ENCODE measurements at regions of chr6 and their contacts with region 1.

Region 1: DNA sequence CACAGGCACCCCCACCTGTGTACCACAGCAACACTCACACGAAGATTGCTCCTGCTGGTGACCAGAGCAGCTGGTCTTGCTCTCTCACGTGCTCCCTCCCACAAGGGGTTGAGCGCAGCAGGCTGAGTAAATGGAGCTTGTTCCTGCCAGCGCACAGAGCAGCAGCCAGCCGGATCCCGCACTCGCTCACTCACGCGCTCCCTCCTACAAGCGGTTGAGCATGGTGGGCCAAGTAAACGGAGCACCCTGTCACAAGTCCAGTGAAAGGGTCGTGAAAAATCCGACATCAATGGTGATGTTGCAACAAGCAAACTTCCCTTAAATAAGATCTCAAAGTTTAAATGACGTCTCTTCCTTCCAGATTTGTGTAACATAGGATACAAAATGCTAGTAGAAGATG is 313.7 kb downstream of the FOXC1 start:
- DNase-seq: no peak
- ATAC-seq: no peak
- H3K4me3 ChIP-seq: no peak overlapping the region
- H3K27ac ChIP-seq: no peak overlapping the region
- H3K4me1 ChIP-seq: no peaks in the 10 kb centered on the region
- H3K27me3 ChIP-seq: no peaks in the 10 kb centered on the region
- CTCF ChIP-seq: no peak

Region 2: GRCh38 chr6:1424306-1424928 is 499.0 kb before region 1 on chr6:
- intact Hi-C with region 1: no loop called
- DNase-seq: peak in 1 of 2 donors; percentile 33
- ATAC-seq: peak in 2 of 8 donors; percentile 45 to 55
- H3K4me3 ChIP-seq: no peak overlapping the region
- H3K27ac ChIP-seq: no peak overlapping the region
- H3K4me1 ChIP-seq: no peaks in the 10 kb centered on the region
- H3K27me3 ChIP-seq: peaks cover 0 to 53% (median 42%) of the 10 kb centered on the region in 7 donors
- CTCF ChIP-seq: peak in 6 of 9 donors; percentile 34 to 60 (median 55)

Region 3: DNA sequence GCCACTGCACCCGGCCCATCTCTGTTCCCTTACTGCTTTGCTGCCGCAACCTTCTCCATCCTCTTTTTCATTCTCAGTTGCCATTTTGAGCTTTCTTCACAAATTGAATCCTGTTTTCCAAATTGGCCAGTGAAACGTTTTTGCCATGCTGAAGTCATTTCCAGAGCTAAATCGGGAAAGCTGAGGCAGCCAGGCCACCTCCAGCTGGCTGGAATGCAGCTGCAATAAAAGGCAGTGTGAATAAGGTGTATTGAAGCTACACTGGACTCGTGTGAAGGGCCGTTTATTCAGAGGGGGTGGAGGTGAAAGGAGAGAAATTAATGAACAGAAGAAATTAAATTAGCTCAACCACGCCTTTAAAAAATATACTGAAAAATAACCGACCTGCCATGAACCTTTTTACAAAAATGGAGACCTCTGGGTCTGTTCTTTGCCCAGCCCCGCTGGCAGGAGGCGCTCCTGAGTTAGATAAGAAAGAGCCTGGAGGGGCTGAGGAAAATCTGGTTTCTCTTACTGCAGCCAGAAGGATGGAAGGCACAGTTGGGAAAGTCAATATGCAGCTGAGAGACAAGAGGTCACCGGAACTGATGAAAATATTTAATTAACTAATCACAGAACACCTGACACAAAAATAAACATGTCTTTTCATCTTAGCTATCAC is 29.8 kb before region 1 on chr6:
- intact Hi-C with region 1: loop called in 1 of 10 experiments (anchors 2 kb)
- DNase-seq: no peak
- ATAC-seq: no peak
- H3K4me3 ChIP-seq: no peak overlapping the region
- H3K27ac ChIP-seq: no peak overlapping the region
- H3K4me1 ChIP-seq: peaks cover 0 to 7% (median 0%) of the 10 kb centered on the region in 9 donors
- H3K27me3 ChIP-seq: no peaks in the 10 kb centered on the region
- CTCF ChIP-seq: no peak

Region 4: DNA sequence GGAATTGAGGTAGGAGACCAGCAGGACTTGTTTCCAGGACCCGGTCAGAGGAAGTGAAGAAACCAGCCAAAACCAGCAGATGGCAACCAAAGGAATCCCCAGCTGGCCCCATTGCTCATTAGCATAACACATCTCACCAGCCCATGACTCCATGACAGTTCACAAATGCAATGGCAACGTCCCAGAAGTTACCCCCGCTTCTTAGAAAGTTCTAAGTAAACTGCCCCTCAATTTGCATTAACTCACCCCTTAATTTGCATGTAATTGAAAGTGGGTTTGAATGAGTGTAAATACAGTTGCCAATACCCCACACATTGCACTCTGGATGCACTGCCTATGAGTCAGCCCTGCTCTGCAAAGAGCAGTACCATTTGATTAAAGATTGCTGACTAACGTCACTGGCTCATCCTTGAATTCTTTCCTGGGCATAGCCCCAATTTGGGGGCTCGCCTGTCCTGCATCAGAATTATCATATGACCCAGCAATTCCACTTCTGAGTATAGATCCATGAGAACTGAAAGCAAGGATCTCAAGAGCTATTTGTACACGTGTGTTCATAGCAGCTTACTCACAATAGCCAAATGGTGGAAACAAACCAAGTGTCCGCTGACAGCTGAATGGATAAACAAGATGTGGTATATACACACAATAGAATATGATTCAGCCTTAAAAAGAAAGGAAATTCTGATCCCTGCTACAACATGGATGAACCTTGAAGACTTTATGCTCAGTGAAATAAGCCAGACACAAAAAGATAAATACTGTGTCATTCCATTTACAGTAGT is 790.9 kb after region 1 on chr6:
- intact Hi-C with region 1: no loop called
- DNase-seq: no peak
- ATAC-seq: peak in 5 of 8 donors; percentile 74 to 89 (median 78)
- H3K4me3 ChIP-seq: no peak overlapping the region
- H3K27ac ChIP-seq: no peak overlapping the region
- H3K4me1 ChIP-seq: peaks cover 0 to 22% (median 0%) of the 10 kb centered on the region in 9 donors
- H3K27me3 ChIP-seq: no peaks in the 10 kb centered on the region
- CTCF ChIP-seq: no peak

Measured in heart right ventricle (tissue), 16 donors.